Activated CD4-positive, alpha-beta memory T cell treated with anti-CD3 and anti-CD28 coated beads, Interleukin-2, amount 10 ng/mL, durations not matched to agents 7 days and 5 days (primary cell): ENCODE measurements at regions of chr19 and their contacts with region 1.

Region 1: GRCh38 chr19:1896508-1896907 is 8.7 kb upstream of the ADAT3 start:
- DNase-seq: no peak
- H3K4me3 Mint-ChIP-seq: peak overlapping the region; percentile 86
- H3K27ac Mint-ChIP-seq: peak overlapping the region; percentile 100
- H3K4me1 Mint-ChIP-seq: peaks cover 50% of the 10 kb centered on the region
- H3K27me3 Mint-ChIP-seq: no peaks in the 10 kb centered on the region

Region 2: GRCh38 chr19:1822210-1822609 is 74.3 kb before region 1 on chr19:
- CTCF ChIA-PET with region 1: no interaction called
- POLR2A ChIA-PET with region 1: no interaction called
- DNase-seq: no peak
- H3K4me3 Mint-ChIP-seq: no peak overlapping the region
- H3K27ac Mint-ChIP-seq: no peak overlapping the region
- H3K4me1 Mint-ChIP-seq: peaks cover 3% of the 10 kb centered on the region
- H3K27me3 Mint-ChIP-seq: no peaks in the 10 kb centered on the region

Region 3: DNA sequence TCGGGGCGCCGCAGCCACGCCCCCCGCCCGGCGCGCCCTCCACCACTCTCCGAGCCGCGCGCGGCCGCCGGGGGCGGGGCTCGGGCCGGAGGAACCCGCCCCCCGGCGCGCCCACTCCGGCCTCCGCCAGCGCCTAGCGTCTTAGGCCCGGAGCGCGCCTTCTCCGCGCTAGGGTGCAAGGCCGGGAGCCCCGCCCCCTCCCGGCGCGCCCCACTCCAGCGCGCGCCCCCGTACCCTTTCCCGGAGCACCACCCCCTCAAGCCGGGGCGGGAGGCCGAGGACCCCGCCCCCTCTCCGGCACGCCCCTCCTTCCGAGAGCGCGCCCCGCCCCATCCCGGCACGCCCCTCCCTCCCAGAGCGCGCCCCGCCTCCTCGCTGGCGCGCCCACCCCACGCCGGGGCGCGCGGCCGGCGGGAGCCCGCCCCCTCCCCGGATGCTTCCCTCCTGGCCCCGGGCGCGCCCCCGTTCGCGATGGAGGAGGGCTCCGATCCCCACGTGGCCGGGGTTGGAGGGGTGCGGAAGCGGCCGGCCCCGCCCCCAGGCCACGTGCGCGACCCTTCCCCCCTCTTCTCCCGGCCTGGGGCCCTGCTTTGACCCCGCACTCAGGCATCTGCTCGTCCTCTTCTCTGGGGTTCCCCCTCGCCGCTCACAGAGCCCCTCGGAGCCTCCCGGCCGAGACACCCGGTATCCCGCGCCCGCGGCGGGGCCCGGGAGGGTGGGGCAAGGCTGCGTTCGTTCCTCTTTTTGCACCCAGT is 32.6 kb before region 1 on chr19:
- CTCF ChIA-PET with region 1: interaction called, 22 read pairs
- POLR2A ChIA-PET with region 1: interaction called, 40 read pairs
- DNase-seq: peak; percentile 93
- H3K4me3 Mint-ChIP-seq: peak overlapping the region; percentile 74
- H3K27ac Mint-ChIP-seq: peak overlapping the region; percentile 77
- H3K4me1 Mint-ChIP-seq: peaks cover 44% of the 10 kb centered on the region
- H3K27me3 Mint-ChIP-seq: no peaks in the 10 kb centered on the region

Region 4: DNA sequence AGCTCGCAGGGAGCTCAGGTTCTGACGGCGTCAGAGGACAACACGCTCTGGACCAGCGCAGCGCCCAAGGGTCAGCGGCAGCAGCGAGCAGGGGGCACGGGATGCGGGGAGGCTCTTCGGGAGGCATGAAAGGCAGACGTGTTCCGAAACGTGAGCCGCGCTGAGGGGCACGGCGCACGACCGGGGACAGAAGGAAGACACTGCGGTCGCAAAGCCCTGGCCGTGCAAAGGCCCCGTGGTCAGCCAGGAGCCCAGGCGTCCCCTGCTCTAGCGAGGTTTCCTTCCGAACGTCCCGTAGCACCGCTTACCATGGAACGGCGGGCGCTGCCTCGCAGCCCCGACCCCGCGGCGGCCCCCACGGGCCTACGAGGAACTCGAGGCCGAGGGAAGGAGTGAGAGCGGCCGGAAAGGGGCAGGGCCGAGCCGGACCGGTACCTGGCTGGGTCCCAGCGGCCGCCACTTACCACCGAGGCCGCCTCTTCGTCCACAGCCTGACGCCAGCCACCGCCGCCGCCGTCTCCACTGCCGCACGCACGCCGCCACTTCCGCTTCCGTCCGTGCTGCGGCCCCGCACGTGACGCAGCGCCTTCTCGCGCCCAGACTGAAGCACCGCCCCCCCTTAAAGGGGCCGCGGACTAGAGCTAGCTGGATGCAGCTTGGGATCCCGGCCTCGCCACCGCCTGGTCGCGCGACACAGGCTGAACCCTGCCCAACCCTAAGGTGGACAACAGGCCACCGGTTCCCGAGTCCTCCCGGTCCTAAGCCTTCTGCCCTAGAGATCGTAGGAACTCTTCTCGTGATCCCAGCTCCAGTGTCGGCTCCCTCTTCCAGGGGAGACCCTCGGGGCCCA is 20.6 kb before region 1 on chr19:
- CTCF ChIA-PET with region 1: interaction called, 18 read pairs
- POLR2A ChIA-PET with region 1: interaction called, 74 read pairs
- DNase-seq: peak; percentile 92
- H3K4me3 Mint-ChIP-seq: peak overlapping the region; percentile 99
- H3K27ac Mint-ChIP-seq: peak overlapping the region; percentile 99
- H3K4me1 Mint-ChIP-seq: peaks cover 28% of the 10 kb centered on the region
- H3K27me3 Mint-ChIP-seq: no peaks in the 10 kb centered on the region

Region 5: DNA sequence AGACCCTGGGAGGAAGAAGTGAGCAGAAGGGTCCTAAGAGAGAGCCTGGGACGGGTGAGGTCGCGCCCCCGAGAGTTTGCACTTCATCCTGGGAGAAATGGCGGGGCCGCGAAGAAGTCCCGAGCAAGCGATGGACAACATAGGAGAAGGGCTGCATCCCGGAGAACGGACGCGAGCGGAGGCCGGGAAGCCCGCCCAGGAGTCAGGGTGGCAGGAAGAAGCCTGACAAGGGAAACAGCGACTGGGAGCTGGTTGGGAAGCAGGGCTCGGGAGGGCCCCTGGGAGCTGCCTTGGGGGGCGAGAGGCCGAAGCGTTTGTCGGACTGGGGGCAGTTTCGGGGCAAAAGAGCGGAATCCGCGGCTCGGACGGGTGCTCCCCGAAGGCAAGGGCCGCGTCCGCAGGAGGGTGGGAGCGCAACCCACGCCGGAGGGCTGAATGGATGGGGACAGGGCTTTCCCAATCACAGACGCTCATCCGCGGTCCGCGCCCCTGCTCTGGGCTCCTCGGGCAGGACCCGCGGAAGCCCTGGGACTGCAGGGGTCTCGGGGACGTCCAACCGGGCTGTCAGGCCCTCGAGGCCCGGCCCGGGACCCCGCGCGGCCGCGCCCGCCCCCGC is 11.7 kb before region 1 on chr19:
- CTCF ChIA-PET with region 1: interaction called, 7 read pairs
- POLR2A ChIA-PET with region 1: interaction called, 111 read pairs
- DNase-seq: no peak
- H3K4me3 Mint-ChIP-seq: peak overlapping the region; percentile 98
- H3K27ac Mint-ChIP-seq: peak overlapping the region; percentile 97
- H3K4me1 Mint-ChIP-seq: peaks cover 41% of the 10 kb centered on the region
- H3K27me3 Mint-ChIP-seq: no peaks in the 10 kb centered on the region

Region 6: DNA sequence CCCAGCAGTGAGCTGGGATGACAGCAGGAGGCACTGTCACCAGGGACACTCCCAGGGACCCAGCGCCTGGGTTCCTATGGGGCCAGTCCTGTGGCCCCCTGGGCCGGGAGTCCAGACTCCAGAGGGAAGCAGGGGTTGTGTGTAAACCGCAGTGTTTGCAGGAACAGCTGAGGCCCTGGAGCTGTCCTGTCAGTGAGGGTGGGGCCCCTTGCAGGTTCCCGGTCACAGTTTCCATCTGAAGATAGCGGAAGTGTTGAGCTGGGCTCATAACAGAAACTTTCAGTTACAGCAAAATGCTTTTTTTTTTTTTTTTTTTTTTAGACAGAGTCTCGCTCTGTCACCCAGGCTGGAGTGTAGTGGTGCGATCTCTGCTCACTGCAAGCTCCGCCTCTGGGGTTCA is 26.8 kb after region 1 on chr19:
- CTCF ChIA-PET with region 1: interaction called, 21 read pairs
- POLR2A ChIA-PET with region 1: interaction called, 19 read pairs
- DNase-seq: peak; percentile 76
- H3K4me3 Mint-ChIP-seq: no peak overlapping the region
- H3K27ac Mint-ChIP-seq: peak overlapping the region; percentile 90
- H3K4me1 Mint-ChIP-seq: peaks cover 54% of the 10 kb centered on the region
- H3K27me3 Mint-ChIP-seq: no peaks in the 10 kb centered on the region

Region 7: GRCh38 chr19:1929021-1929742 is 32.7 kb after region 1 on chr19:
- CTCF ChIA-PET with region 1: interaction called, 21 read pairs
- POLR2A ChIA-PET with region 1: interaction called, 19 read pairs
- DNase-seq: peak; percentile 84
- H3K4me3 Mint-ChIP-seq: peak overlapping the region; percentile 58
- H3K27ac Mint-ChIP-seq: no peak overlapping the region
- H3K4me1 Mint-ChIP-seq: peaks cover 41% of the 10 kb centered on the region
- H3K27me3 Mint-ChIP-seq: no peaks in the 10 kb centered on the region

Region 8: GRCh38 chr19:2084993-2085720 is 188.6 kb after region 1 on chr19:
- CTCF ChIA-PET with region 1: interaction called, 4 read pairs
- POLR2A ChIA-PET with region 1: interaction called, 18 read pairs
- DNase-seq: peak; percentile 97
- H3K4me3 Mint-ChIP-seq: peak overlapping the region; percentile 95
- H3K27ac Mint-ChIP-seq: peak overlapping the region; percentile 95
- H3K4me1 Mint-ChIP-seq: peaks cover 64% of the 10 kb centered on the region
- H3K27me3 Mint-ChIP-seq: no peaks in the 10 kb centered on the region

Region 9: GRCh38 chr19:2232286-2233151 is 336.0 kb after region 1 on chr19:
- CTCF ChIA-PET with region 1: no interaction called
- POLR2A ChIA-PET with region 1: no interaction called
- DNase-seq: no peak
- H3K4me3 Mint-ChIP-seq: no peak overlapping the region
- H3K27ac Mint-ChIP-seq: peak overlapping the region; percentile 44
- H3K4me1 Mint-ChIP-seq: peaks cover 31% of the 10 kb centered on the region
- H3K27me3 Mint-ChIP-seq: no peaks in the 10 kb centered on the region